Activated CD8-positive, alpha-beta T cell treated with anti-CD3 and anti-CD28 coated beads, Interleukin-2, amount 10 ng/mL, durations not matched to agents 7 days and 5 days (primary cell): ENCODE measurements at regions of chr7 and their contacts with region 1.

Region 1: GRCh38 chr7:44565097-44565794 is 8.5 kb downstream of the DDX56 start:
- DNase-seq: peak; percentile 69
- ATAC-seq: peak; percentile 88
- H3K4me3 Mint-ChIP-seq: no peak overlapping the region
- H3K27ac Mint-ChIP-seq: no peak overlapping the region
- H3K4me1 Mint-ChIP-seq: peaks cover 7% of the 10 kb centered on the region
- H3K27me3 Mint-ChIP-seq: no peaks in the 10 kb centered on the region

Region 2: DNA sequence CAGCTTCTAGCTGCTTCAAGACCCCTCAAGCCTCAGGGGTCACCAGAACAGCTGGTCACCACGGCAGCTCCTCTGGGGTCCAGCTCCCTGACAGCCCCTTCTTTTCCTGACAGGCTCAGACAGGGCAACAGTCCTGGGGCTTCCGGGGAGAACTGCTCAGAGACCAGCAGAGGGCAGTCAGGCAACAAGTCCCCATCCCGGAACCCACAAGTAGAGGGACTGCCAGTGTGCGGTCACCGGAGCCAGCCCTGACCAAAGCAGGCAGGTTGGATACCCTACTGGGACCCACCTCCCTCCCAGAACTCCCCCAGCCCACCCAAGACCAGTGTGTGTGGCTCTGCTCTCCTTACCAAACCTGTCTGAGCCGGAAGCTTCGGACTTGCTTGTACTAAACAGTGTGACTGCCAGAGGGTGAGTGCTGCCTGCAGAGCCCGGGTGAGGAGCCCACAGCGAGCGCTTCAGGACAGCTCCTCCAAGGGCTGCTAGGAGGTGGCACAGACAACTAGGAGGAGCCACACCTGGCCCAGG is 324.2 kb before region 1 on chr7:
- CTCF ChIA-PET with region 1: interaction called, 43 read pairs
- POLR2A ChIA-PET with region 1: no interaction called
- DNase-seq: peak; percentile 77
- ATAC-seq: peak; percentile 87
- H3K4me3 Mint-ChIP-seq: peak overlapping the region; percentile 18
- H3K27ac Mint-ChIP-seq: peak overlapping the region; percentile 75
- H3K4me1 Mint-ChIP-seq: peaks cover 6% of the 10 kb centered on the region
- H3K27me3 Mint-ChIP-seq: no peaks in the 10 kb centered on the region

Region 3: GRCh38 chr7:44257618-44258422 is 307.4 kb before region 1 on chr7:
- CTCF ChIA-PET with region 1: interaction called, 11 read pairs
- POLR2A ChIA-PET with region 1: no interaction called
- DNase-seq: peak; percentile 83
- ATAC-seq: peak; percentile 91
- H3K4me3 Mint-ChIP-seq: peak overlapping the region; percentile 15
- H3K27ac Mint-ChIP-seq: peak overlapping the region; percentile 96
- H3K4me1 Mint-ChIP-seq: peaks cover 29% of the 10 kb centered on the region
- H3K27me3 Mint-ChIP-seq: no peaks in the 10 kb centered on the region

Region 4: GRCh38 chr7:44348300-44348699 is 216.9 kb before region 1 on chr7:
- CTCF ChIA-PET with region 1: interaction called, 21 read pairs
- POLR2A ChIA-PET with region 1: no interaction called
- DNase-seq: peak; percentile 32
- ATAC-seq: peak; percentile 57
- H3K4me3 Mint-ChIP-seq: no peak overlapping the region
- H3K27ac Mint-ChIP-seq: no peak overlapping the region
- H3K4me1 Mint-ChIP-seq: no peaks in the 10 kb centered on the region
- H3K27me3 Mint-ChIP-seq: peaks cover 37% of the 10 kb centered on the region

Region 5: DNA sequence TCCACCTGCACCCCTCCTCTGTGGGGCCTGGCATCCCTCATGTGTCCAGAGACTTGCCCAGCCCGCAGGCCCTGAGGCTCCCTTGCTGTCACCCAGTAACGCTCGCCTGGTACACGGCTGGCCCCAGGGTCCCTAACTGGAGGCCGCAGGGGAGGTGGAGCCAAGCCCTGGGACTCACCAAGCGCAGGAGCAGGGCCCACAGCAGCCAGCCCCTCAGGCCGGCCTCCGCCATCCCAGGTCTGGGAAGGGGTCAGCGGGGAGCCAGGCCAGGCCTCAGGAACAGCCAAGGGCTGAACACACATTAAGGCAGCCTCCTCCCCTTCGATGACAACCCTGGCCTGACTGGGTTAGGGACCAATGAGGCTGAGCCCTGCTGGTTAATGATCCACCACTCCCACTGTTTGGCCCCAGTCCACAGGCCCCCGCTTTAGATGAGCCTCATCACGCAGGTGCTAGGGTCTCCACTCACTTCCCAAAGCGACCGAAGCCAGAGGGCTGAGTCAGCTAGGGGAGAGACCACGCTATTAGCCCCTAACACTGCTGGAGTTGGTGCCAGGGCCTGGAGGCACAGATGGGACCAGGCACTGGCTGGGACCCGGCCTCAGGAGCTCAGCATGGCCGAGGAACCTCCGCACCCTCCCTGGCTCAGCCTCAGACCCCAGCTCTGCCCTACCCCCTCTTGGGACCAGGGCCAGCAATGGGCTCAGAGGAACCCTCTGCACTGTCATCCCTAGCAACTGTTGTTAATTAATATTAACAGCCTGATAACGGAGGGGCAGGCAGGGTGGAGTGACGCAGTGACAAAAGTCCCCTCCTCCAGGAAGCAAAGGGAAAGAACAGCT is 24.0 kb before region 1 on chr7 and contains the start of gene NPC1L1:
- CTCF ChIA-PET with region 1: interaction called, 10 read pairs
- POLR2A ChIA-PET with region 1: no interaction called
- DNase-seq: no peak
- ATAC-seq: no peak
- H3K4me3 Mint-ChIP-seq: no peak within 1 kb of the TSS
- H3K27ac Mint-ChIP-seq: no peak within 1 kb of the TSS
- H3K4me1 Mint-ChIP-seq: no peaks in the 10 kb centered on the region
- H3K27me3 Mint-ChIP-seq: no peaks in the 10 kb centered on the region
- total RNA-seq, gene NPC1L1: not detected

Region 6: DNA sequence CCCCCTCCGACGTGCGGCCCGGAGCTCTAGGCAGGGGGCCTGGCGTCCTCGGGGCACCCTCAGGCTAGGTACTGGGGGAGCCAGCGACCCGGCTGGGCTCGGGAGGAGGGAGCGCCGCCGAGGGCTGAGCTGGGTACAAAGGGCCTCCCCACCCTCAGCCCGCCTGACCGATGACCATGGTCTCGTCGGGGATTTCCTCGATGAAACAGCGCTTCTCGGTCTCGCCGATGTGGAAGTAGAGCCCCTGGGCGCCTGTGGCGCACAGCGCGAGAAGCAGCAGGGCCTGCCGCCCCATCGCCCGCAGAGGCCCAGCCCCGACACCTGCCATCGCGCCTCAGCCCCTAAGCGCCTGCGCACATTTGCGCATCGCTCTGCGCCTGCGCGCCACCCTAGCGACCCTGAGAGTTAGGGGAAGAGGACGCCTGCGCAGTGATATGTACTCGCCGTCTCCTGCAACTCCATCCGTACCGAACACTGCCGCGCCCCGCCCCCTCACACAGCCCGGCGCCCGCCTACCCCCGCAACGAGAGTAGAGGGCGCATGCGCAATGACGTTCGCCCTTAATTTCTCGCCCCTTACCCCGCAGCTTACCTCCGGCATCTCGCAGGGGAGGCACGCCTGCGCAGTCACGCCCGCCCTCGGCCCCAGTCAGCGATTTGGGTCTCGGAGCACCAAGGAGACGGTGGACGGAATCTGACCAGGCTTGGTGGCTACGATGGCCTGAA is 16.8 kb after region 1 on chr7 and contains the start of gene TMED4:
- CTCF ChIA-PET with region 1: interaction called, 50 read pairs
- POLR2A ChIA-PET with region 1: interaction called, 8 read pairs
- DNase-seq: peak; percentile 100
- ATAC-seq: peak; percentile 95
- H3K4me3 Mint-ChIP-seq: peak within 1 kb of the TSS; percentile 93
- H3K27ac Mint-ChIP-seq: peak within 1 kb of the TSS; percentile 91
- H3K4me1 Mint-ChIP-seq: peaks cover 38% of the 10 kb centered on the region
- H3K27me3 Mint-ChIP-seq: peaks cover 3% of the 10 kb centered on the region
- total RNA-seq, gene TMED4: 63.8 to 65.9 TPM